ENCODE measurements at regions of chr11 and their contacts with region 1.

Region 1: GRCh38 chr11:126698576-126698975 is 302.0 kb downstream of the KIRREL3 start:
- DNase-seq: peak in 1 of 10 donors; percentile 82

Region 2: DNA sequence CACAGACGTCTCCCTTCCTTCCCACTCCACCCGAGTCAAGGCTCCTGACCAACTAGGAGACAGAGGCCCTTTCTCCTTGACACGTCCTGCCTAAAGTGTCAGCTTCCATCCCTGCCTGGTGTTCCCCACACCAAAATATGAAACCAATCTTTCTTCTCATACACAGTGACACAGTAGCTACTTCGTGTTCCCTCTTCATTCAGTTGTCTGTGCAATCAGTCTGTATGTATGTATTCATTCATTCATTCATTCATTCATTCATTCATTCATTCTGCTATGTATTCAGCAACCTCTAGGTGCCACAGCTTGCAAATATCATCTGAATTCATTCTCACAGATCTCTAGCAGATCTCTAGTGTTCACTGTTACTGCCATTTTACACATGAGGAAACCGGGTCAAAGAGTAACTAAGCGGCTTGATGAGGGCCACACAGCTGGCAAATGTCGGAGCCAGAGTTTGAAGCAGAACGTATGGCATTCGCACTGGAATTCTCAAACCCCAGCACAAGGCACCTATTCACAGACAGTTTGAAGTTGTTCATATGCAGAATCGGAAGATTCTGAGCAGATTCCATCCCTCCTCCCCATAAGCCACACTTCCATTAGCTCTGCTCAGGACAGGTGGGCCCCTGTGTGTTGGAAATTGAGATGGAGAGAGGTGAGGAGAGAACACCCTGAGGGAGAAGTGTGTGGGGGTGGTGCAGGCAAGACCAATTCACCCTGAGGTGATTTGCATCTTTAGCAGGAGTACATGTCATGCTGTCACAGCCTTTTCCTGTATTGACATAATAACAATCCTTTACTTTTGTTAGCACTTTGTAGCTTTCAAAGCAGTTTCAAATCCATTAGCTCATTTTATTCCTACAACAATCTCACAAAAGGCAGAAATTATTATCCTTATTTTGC is 67.4 kb before region 1 on chr11:
- intact Hi-C with region 1: loop called (anchors 2 kb)
- DNase-seq: no peak

Region 3: DNA sequence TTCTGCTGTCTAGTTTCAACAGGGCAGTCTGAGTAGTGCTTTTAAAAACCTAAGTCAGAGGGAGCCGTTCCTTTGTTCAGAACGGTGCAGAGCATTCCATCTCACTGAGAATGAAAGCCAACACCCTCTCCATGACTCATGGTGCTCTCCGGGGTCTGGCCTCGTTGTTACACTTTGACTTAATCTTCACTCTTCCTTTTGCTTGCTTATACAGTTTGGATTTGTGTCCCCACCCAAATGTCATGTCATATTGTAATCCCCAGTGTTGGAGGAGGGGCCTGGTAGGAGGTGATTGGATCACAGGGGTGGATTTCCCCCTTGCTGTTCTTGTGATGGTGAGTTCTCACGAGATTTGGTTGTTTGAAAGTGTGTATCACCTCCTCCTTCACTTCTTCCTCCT is 50.8 kb before region 1 on chr11:
- intact Hi-C with region 1: no loop called
- DNase-seq: no peak

Region 4: GRCh38 chr11:127601578-127601977 is 903.0 kb after region 1 on chr11:
- intact Hi-C with region 1: no loop called
- DNase-seq: peak in 2 of 10 donors; percentile 30 to 52